Naive thymus-derived CD4-positive, alpha-beta T cell (primary cell): ENCODE measurements at regions of chr2 and their contacts with region 1.

Region 1: GRCh38 chr2:48398285-48399002 is 131.5 kb upstream of the STON1 start:
- DNase-seq: no peak
- ATAC-seq: no peak
- H3K4me3 ChIP-seq: no peak overlapping the region
- H3K4me3 Mint-ChIP-seq: no peak overlapping the region
- H3K27ac ChIP-seq: no peak overlapping the region
- H3K27ac Mint-ChIP-seq: no peak overlapping the region
- H3K4me1 ChIP-seq: peaks cover 0 to 9% of the 10 kb centered on the region in 2 donors
- H3K4me1 Mint-ChIP-seq: peaks cover 7 to 22% (median 10%) of the 10 kb centered on the region in 7 donors
- H3K27me3 ChIP-seq: no peaks in the 10 kb centered on the region
- H3K27me3 Mint-ChIP-seq: peaks cover 0 to 8% (median 0%) of the 10 kb centered on the region in 5 donors

Region 2: GRCh38 chr2:46836295-46837111 is 1561.9 kb before region 1 on chr2:
- CTCF ChIA-PET with region 1: no interaction called
- POLR2A ChIA-PET with region 1: no interaction called
- intact Hi-C with region 1: no loop called
- DNase-seq: no peak
- ATAC-seq: peak; percentile 14
- H3K4me3 ChIP-seq: no peak overlapping the region
- H3K4me3 Mint-ChIP-seq: no peak overlapping the region
- H3K27ac ChIP-seq: no peak overlapping the region
- H3K27ac Mint-ChIP-seq: no peak overlapping the region
- H3K4me1 ChIP-seq: no peaks in the 10 kb centered on the region
- H3K4me1 Mint-ChIP-seq: peaks cover 0 to under 1% (median 0%) of the 10 kb centered on the region in 7 donors
- H3K27me3 ChIP-seq: no peaks in the 10 kb centered on the region
- H3K27me3 Mint-ChIP-seq: peaks cover 0 to 7% (median 0%) of the 10 kb centered on the region in 5 donors

Region 3: DNA sequence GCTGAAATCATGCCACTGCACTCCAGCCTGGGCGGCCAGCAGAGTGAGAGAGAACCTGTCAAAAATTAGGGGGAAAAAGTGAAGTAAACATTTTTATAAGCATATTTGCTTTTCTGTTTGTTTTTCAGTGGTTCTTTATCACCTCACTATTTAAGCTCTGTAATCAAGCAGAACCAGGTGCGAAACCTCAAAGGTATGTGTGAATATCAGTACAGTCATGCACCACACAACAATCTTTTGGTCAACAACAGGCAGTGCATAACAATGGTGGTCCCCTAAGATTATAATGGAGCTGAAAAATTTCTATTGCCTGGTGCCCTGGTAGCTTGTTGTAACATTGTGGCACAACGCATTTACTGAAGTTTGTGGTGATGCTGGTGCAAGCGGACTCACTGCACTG is 35.9 kb before region 1 on chr2:
- CTCF ChIA-PET with region 1: no interaction called
- POLR2A ChIA-PET with region 1: no interaction called
- intact Hi-C with region 1: loop called in 1 of 2 experiments (anchors 5 kb)
- DNase-seq: no peak
- ATAC-seq: no peak
- H3K4me3 ChIP-seq: no peak overlapping the region
- H3K4me3 Mint-ChIP-seq: no peak overlapping the region
- H3K27ac ChIP-seq: no peak overlapping the region
- H3K27ac Mint-ChIP-seq: peak overlapping the region in 2 of 9 donors; percentile 46 to 55
- H3K4me1 ChIP-seq: peaks cover 7 to 8% of the 10 kb centered on the region in 2 donors
- H3K4me1 Mint-ChIP-seq: peaks cover 18 to 51% (median 34%) of the 10 kb centered on the region in 7 donors
- H3K27me3 ChIP-seq: no peaks in the 10 kb centered on the region
- H3K27me3 Mint-ChIP-seq: no peaks in the 10 kb centered on the region

Region 4: GRCh38 chr2:48377646-48378045 is 20.8 kb before region 1 on chr2:
- CTCF ChIA-PET with region 1: no interaction called
- POLR2A ChIA-PET with region 1: interaction called, 3 read pairs
- intact Hi-C with region 1: loop called in 1 of 2 experiments (anchors 2 kb)
- DNase-seq: no peak
- ATAC-seq: no peak
- H3K4me3 ChIP-seq: no peak overlapping the region
- H3K4me3 Mint-ChIP-seq: no peak overlapping the region
- H3K27ac ChIP-seq: no peak overlapping the region
- H3K27ac Mint-ChIP-seq: no peak overlapping the region
- H3K4me1 ChIP-seq: no peaks in the 10 kb centered on the region
- H3K4me1 Mint-ChIP-seq: peaks cover 0 to 6% (median 0%) of the 10 kb centered on the region in 7 donors
- H3K27me3 ChIP-seq: no peaks in the 10 kb centered on the region
- H3K27me3 Mint-ChIP-seq: no peaks in the 10 kb centered on the region